CD4-positive, alpha-beta T cell (primary cell): ENCODE measurements at regions of chr7 and their contacts with region 1.

Region 1: GRCh38 chr7:17063045-17063383 is 181.2 kb upstream of the AGR3 start:
- DNase-seq: peak in 1 of 14 experiments; percentile 31
- ATAC-seq: no peak
- H3K4me3 ChIP-seq: no peak overlapping the region
- H3K4me3 Mint-ChIP-seq: no peak overlapping the region
- H3K27ac ChIP-seq: no peak overlapping the region
- H3K27ac Mint-ChIP-seq: no peak overlapping the region
- H3K4me1 ChIP-seq: no peaks in the 10 kb centered on the region
- H3K4me1 Mint-ChIP-seq: no peaks in the 10 kb centered on the region
- H3K27me3 ChIP-seq: no peaks in the 10 kb centered on the region
- H3K27me3 Mint-ChIP-seq: no peaks in the 10 kb centered on the region
- CTCF ChIP-seq: peak; percentile 49

Region 2: DNA sequence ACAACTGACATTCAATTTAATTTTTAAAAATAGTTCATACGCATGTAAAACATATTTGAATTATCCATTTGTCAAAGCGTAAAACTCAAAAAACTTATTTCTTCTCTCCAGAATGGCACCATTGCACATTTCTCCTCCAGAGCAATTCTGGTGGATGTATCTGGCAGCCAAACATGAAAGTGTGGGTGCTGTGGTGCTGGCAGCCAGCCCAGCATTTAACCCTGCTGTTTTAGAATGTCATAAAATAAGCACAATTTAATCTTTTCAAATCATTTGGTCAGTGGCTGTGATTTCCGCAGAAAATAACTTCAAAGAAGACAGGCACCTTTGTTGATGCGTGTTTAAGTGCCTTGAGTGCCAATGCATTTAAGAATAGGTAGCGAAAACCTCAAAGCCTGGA is 1073.8 kb before region 1 on chr7:
- CTCF ChIA-PET with region 1: no interaction called
- POLR2A ChIA-PET with region 1: no interaction called
- intact Hi-C with region 1: no loop called
- DNase-seq: no peak
- ATAC-seq: no peak
- H3K4me3 ChIP-seq: no peak overlapping the region
- H3K4me3 Mint-ChIP-seq: no peak overlapping the region
- H3K27ac ChIP-seq: no peak overlapping the region
- H3K27ac Mint-ChIP-seq: no peak overlapping the region
- H3K4me1 ChIP-seq: no peaks in the 10 kb centered on the region
- H3K4me1 Mint-ChIP-seq: no peaks in the 10 kb centered on the region
- H3K27me3 ChIP-seq: no peaks in the 10 kb centered on the region
- H3K27me3 Mint-ChIP-seq: no peaks in the 10 kb centered on the region
- CTCF ChIP-seq: no peak

Region 3: DNA sequence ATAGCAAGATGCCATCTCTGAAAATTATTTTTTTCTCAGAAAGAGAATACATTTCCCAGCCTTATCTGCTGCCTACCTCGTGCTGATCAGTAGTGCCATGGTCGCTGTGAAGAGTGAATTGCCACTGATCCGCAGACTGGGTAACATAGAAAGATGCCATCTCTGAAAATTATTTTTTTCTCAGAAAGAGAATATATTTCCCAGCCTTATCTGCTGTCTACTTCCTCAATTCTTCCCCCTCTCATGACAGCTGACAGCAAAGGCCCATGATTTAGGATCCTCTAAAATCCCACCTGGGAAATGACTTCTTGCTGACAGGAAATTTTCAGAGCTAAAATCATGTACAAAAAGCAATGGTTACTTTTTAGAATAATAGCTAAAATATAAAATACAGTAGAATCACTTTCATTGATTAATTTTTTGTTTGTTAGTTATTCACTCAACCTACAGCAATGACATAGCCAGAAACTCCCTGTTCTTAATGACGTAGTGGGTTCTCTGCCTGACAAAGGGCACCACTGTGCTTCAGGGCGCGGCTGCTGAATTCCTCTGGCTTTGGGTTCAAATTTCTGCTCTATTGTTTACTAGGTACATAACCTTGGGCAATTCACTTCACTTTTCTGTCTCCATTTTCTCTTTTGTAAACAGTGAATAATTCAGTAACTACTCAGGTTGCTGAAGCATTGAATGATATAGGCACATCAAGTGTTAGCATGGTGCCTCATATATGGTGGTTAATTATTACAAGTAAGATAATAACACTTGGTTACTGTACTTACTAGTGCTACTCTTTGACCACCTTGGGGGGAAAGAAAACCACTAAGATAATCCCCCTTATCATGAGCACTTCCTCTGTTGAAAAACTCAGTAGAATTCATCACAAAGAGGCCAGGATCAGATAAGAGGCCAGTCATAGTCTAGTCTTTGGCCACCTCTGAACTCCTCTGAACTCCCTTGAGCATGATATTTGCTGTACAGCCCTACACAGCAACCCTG is 143.2 kb after region 1 on chr7:
- CTCF ChIA-PET with region 1: no interaction called
- POLR2A ChIA-PET with region 1: no interaction called
- intact Hi-C with region 1: no loop called
- DNase-seq: no peak
- ATAC-seq: no peak
- H3K4me3 ChIP-seq: no peak overlapping the region
- H3K4me3 Mint-ChIP-seq: no peak overlapping the region
- H3K27ac ChIP-seq: no peak overlapping the region
- H3K27ac Mint-ChIP-seq: no peak overlapping the region
- H3K4me1 ChIP-seq: no peaks in the 10 kb centered on the region
- H3K4me1 Mint-ChIP-seq: no peaks in the 10 kb centered on the region
- H3K27me3 ChIP-seq: no peaks in the 10 kb centered on the region
- H3K27me3 Mint-ChIP-seq: no peaks in the 10 kb centered on the region
- CTCF ChIP-seq: no peak

Region 4: DNA sequence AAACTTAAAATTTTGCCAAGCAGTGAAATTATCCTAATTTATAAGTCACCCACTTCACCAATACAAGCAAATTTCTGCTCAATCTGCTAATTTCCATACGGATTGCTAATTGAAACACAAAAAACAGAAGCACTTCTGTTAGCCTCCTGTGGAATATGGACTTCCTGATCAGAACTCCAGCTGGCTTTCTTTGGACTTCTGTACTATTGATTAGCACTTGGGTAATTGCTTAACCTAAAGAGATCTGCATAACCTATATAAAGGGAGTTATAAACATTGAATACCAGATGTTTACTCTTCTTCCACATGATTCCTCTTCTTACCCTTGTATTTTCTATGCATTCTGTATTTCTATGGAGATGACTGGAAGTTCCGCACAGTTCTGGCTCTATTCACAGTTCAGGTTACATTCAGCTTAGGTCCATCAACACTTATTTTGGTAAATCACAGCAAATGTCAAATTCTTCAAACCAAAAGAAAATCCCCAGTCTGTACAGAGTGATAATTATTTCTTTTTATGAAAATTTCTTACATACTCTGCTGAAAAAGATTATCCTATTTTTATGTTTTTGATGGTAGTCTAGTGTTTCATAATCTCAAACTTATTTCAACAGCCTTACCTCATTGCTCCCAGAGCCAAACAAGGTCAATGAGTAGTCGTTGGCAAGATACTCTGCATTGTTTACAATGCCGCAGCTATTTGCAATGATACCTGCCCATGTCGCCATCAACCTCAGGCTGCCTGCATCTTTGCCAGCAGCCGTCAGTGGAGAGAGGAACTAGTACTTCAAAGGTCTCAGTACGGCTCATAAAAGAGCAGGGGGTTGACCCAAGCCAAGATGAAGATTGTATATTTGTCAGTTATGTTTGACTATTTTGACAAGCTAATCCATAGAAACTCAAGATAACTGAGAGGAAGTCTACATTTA is 461.1 kb after region 1 on chr7:
- CTCF ChIA-PET with region 1: no interaction called
- POLR2A ChIA-PET with region 1: no interaction called
- intact Hi-C with region 1: loop called in 1 of 2 experiments (anchors 10 kb)
- DNase-seq: no peak
- ATAC-seq: no peak
- H3K4me3 ChIP-seq: no peak overlapping the region
- H3K4me3 Mint-ChIP-seq: no peak overlapping the region
- H3K27ac ChIP-seq: no peak overlapping the region
- H3K27ac Mint-ChIP-seq: no peak overlapping the region
- H3K4me1 ChIP-seq: no peaks in the 10 kb centered on the region
- H3K4me1 Mint-ChIP-seq: no peaks in the 10 kb centered on the region
- H3K27me3 ChIP-seq: no peaks in the 10 kb centered on the region
- H3K27me3 Mint-ChIP-seq: no peaks in the 10 kb centered on the region
- CTCF ChIP-seq: no peak